Ovary (tissue), 10 donors: ENCODE measurements at regions of chr10 and their contacts with region 1.

Region 1: GRCh38 chr10:46284293-46285229 is 2.2 kb upstream of the ANTXRL start:
- DNase-seq: peak; percentile 67 to 87 (median 75)
- H3K4me3 ChIP-seq: peak overlapping the region; percentile 66
- H3K27ac ChIP-seq: no peak overlapping the region
- H3K4me1 ChIP-seq: peaks cover 4% of the 10 kb centered on the region
- H3K27me3 ChIP-seq: no peaks in the 10 kb centered on the region
- CTCF ChIP-seq: no peak
- EP300 ChIP-seq: no peak
- POLR2A ChIP-seq: no peak

Region 2: DNA sequence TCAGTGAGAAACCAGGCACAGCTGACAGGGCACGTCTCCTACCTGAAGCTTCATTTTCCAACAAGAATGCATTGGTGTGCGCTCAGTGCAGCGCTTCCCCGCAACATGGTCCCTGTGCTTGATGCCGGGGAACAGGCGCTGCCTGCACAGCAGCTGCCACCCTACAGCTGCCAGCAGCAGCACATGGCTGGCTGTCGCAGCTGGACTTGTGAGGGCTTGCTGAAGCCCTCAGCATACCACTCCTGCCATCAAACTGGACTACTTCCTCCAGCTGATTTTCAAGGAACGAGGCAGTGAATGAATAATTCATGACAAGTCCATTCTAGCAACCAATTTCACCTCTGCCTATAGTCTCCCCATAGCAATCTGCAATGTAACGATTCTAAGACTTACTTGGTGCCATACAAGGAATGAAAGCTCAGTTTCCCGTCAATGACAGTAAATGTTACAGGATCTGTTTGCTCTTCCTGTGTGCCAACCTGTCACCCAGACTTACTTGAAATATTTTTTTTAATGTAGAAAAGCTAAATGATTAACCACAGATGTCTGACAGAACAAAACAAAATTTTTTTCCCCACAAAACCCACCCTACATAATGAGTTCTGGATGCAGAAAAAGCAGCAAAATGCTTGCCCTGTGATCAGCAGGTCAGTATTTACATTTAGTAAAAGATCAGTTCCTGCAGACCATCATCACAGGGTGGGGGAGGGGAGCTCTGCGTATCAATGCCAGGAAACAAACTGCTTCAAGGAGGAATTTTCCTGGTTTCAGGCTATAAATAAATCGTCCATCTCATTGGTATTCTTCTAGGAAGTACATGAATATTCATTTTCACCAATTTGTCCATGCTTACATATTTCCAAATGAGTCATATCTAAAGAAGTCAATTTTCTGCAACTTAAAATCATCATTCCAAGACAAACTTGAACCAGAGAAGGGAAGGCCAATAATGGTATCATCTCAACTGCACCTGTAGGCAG is 770.0 kb before region 1 on chr10:
- intact Hi-C with region 1: loop called in 1 of 4 experiments (anchors 5 kb)
- DNase-seq: no peak
- H3K4me3 ChIP-seq: no peak overlapping the region
- H3K27ac ChIP-seq: no peak overlapping the region
- H3K4me1 ChIP-seq: peaks cover 2% of the 10 kb centered on the region
- H3K27me3 ChIP-seq: no peaks in the 10 kb centered on the region
- CTCF ChIP-seq: no peak
- EP300 ChIP-seq: no peak
- POLR2A ChIP-seq: no peak

Region 3: GRCh38 chr10:46106410-46107255 is 177.9 kb before region 1 on chr10:
- intact Hi-C with region 1: loop called in 1 of 4 experiments (anchors 2 kb)
- DNase-seq: peak in 3 of 5 donors; percentile 33 to 53 (median 49)
- H3K4me3 ChIP-seq: peak overlapping the region; percentile 23
- H3K27ac ChIP-seq: no peak overlapping the region
- H3K4me1 ChIP-seq: peaks cover 6% of the 10 kb centered on the region
- H3K27me3 ChIP-seq: no peaks in the 10 kb centered on the region
- CTCF ChIP-seq: no peak
- EP300 ChIP-seq: no peak
- POLR2A ChIP-seq: no peak

Region 4: DNA sequence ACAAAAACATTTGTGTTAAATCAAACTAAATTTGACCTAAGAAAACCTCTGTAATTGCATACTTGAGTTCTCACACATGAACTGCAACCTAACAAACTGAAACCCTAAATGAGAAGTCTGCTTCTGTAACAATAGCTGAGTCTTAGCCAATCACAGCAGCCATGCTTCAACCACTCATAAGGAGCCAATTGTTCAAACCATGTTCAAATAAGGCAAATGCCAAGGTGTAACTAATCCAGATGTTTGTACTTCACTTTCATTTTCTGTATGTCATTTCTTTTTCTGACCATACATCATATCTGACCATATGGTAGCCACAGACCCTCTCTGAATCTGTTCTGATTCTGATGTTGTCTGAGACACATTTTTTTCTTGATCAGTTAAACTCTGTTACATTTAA is 45.3 kb before region 1 on chr10:
- intact Hi-C with region 1: no loop called
- DNase-seq: no peak
- H3K4me3 ChIP-seq: no peak overlapping the region
- H3K27ac ChIP-seq: no peak overlapping the region
- H3K4me1 ChIP-seq: no peaks in the 10 kb centered on the region
- H3K27me3 ChIP-seq: no peaks in the 10 kb centered on the region
- CTCF ChIP-seq: no peak
- EP300 ChIP-seq: no peak
- POLR2A ChIP-seq: no peak

Region 5: DNA sequence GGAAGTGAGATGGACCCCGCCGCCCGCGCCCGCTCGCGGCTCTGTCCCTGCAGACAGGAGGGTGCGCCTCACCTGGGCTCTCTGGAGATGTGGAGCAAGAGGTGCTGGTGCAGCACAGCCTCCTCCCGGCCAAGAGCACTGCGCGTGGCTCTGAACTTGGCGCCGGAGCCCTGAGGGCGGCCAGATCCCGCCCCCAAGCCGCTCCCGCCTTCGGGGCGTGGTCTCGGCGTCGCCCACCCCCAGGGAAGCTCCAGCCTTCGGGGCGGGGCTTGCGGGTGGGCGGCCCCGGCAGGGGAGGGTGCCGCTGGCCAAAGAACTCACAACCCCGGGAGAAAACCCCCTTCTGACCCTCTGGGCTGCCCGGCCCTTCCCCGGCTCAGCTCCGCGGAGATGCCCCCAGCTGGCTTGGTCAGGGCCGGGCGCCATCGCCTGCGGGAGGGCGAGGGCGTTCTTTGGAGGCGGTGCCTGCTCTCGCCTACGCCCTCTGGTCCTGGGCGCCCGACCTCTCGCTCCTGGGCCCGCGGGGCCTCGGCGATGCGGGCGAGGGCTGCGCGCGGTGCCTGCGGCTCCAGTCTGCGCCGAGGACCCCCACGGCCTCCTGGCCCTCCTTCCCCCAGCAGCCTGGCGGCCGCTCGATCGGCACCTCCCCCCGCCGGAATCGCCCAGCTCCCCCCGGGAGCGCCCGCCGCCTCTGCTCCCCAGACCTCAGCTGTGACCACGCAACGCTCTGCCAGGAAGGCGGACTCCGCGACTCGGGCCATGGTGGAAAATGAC is 1099.8 kb after region 1 on chr10 and contains the start of gene ZNF488:
- intact Hi-C with region 1: loop called in 1 of 4 experiments (anchors 10 kb)
- DNase-seq: peak; percentile 79 to 90 (median 84)
- H3K4me3 ChIP-seq: peak within 1 kb of the TSS; percentile 96
- H3K27ac ChIP-seq: peak within 1 kb of the TSS; percentile 3 to 68
- H3K4me1 ChIP-seq: no peaks in the 10 kb centered on the region
- H3K27me3 ChIP-seq: no peaks in the 10 kb centered on the region
- CTCF ChIP-seq: no peak
- EP300 ChIP-seq: no peak
- POLR2A ChIP-seq: no peak
- total RNA-seq, gene ZNF488: 0.15 to 0.57 (median 0.20) TPM